ENCODE measurements at regions of chr12 and their contacts with region 1.

Region 1: GRCh38 chr12:88015825-88016224 is 13.4 kb downstream of the C12orf50 start:
- DNase-seq: no peak
- H3K4me3 ChIP-seq: no peak overlapping the region
- H3K27ac ChIP-seq: no peak overlapping the region
- H3K4me1 ChIP-seq: no peaks in the 10 kb centered on the region
- H3K27me3 ChIP-seq: no peaks in the 10 kb centered on the region
- CTCF ChIP-seq: no peak

Region 2: DNA sequence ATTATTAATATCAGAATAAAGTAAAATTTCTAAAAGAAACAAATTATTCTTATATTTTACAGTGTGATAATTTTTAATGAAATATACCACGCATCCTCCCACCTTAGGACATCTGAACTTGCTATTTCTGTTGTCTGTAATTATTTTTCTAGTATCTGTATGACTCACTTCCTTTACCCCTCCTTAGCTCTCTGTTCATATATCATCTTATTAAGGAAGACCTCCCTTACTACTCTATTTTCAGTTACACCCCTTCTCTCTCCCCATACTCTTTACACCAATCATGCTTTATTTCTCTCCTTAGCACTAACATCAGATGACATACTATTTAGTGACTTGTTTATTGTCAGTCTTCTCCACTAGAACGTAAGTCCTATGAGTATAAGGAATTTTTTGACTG is 47.5 kb after region 1 on chr12:
- CTCF ChIA-PET with region 1: no interaction called
- POLR2A ChIA-PET with region 1: no interaction called
- intact Hi-C with region 1: loop called (anchors 1 kb)
- DNase-seq: peak; percentile 58
- H3K4me3 ChIP-seq: no peak overlapping the region
- H3K27ac ChIP-seq: no peak overlapping the region
- H3K4me1 ChIP-seq: peaks cover 10% of the 10 kb centered on the region
- H3K27me3 ChIP-seq: no peaks in the 10 kb centered on the region
- CTCF ChIP-seq: no peak